Activated CD8-positive, alpha-beta memory T cell treated with anti-CD3 and anti-CD28 coated beads, Interleukin-2, amount 10 ng/mL, durations not matched to agents 7 days and 5 days (primary cell): ENCODE measurements at regions of chr13 and their contacts with region 1.

Region 1: GRCh38 chr13:45367358-45367757 is 26.4 kb upstream of the TPT1 start:
- DNase-seq: peak; percentile 97
- ATAC-seq: peak; percentile 100
- H3K4me3 Mint-ChIP-seq: peak overlapping the region; percentile 35
- H3K27ac Mint-ChIP-seq: peak overlapping the region; percentile 94
- H3K4me1 Mint-ChIP-seq: peaks cover 58% of the 10 kb centered on the region
- H3K27me3 Mint-ChIP-seq: no peaks in the 10 kb centered on the region

Region 2: DNA sequence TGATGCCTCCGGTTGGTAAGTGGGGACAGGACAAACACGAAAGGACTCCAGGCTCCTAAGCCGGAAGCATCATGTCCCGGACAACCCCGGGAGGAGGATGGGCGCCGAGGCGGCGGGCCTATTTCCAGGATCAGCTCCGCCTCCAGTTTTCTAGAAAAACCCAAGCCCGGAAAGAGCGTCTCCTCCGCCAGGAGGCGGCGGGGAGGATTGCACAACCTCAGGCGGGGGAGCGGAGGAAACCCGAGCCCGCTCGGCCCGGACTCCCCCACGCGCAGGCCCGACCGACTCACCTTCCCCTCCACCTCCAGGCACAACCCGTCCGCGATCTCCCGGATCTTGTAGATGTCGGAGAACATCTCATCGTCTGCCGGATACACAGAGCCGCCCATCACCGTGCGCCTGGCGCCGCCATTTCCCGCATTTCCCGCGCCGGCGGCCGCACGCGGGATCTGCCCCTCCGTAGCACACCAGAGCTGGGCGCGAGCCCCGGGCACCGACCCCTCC is 26.9 kb before region 1 on chr13:
- CTCF ChIA-PET with region 1: interaction called, 52 read pairs
- DNase-seq: peak; percentile 90
- ATAC-seq: peak; percentile 49
- H3K4me3 Mint-ChIP-seq: peak overlapping the region; percentile 92
- H3K27ac Mint-ChIP-seq: peak overlapping the region; percentile 100
- H3K4me1 Mint-ChIP-seq: peaks cover 56% of the 10 kb centered on the region
- H3K27me3 Mint-ChIP-seq: no peaks in the 10 kb centered on the region

Region 3: DNA sequence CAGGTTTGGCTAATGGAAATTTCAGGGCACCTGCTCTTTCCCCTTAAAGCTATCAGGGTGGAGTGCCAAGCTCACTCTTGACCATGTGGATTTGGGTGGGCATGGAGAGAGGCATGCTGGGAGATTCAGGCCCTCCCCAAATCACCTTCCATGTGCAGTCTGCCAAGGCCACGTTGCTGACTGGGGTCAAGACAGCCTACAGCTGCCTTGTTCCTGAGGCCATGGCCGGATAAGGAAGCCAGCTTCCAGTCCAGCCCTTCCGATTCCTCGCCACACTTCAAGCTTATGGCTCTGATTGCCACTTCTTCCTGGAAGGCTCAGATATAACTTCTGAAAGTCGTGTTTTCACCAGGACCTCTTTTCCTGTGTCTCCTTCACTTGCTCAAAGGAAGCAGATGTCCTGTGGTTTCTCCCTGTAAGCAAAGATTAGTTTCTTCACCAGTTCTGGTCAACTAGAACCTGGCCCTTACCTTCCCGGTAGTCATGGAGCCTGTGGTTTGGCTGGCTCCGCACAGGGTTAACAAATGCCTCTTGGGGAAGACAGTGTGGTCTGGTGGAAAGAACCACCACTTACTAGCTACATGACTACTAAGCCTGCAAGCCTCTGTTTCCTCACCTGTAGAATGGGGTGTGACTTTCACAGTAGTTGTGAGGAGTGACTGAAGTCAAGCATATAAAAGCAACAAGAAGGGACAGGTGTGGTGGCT is 10.2 kb before region 1 on chr13:
- CTCF ChIA-PET with region 1: interaction called, 19 read pairs
- DNase-seq: peak; percentile 68
- ATAC-seq: peak; percentile 80
- H3K4me3 Mint-ChIP-seq: no peak overlapping the region
- H3K27ac Mint-ChIP-seq: peak overlapping the region; percentile 66
- H3K4me1 Mint-ChIP-seq: peaks cover 34% of the 10 kb centered on the region
- H3K27me3 Mint-ChIP-seq: no peaks in the 10 kb centered on the region

Region 4: DNA sequence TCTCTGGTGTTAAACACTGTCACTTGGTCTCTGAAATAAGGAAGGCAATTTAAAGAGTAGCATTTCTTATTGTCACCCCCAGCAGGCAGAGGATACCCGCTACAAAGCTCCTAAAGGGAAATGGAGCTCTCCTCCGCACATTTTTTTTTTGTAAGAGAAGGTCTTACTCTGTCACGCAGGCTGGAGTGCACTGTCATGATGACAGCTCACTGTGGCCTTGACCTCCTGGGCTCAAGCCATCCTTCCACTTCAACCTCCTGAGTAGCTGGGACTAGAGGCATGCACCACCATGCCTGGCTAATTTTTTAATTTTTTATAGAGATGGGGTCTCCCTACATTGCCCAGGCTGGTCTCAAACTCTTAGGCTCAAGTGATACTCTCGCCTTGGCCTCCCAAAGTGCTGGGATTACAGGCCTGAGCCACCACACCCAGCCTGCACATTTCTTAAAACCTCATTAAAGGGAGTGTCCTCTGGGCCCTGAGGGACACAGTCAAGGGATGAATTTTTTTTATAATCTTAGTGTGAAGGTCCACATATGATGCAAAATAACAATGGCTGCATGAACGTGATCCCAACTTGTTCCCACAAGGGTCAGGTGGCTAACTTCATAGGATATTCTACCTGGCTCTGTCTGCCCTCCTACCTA is 18.7 kb after region 1 on chr13:
- CTCF ChIA-PET with region 1: interaction called, 27 read pairs
- DNase-seq: no peak
- ATAC-seq: no peak
- H3K4me3 Mint-ChIP-seq: no peak overlapping the region
- H3K27ac Mint-ChIP-seq: no peak overlapping the region
- H3K4me1 Mint-ChIP-seq: peaks cover 15% of the 10 kb centered on the region
- H3K27me3 Mint-ChIP-seq: no peaks in the 10 kb centered on the region

Region 5: GRCh38 chr13:45393941-45394570 is 26.7 kb after region 1 on chr13:
- CTCF ChIA-PET with region 1: interaction called, 108 read pairs
- DNase-seq: peak; percentile 54
- ATAC-seq: peak; percentile 28
- H3K4me3 Mint-ChIP-seq: no peak overlapping the region
- H3K27ac Mint-ChIP-seq: peak overlapping the region; percentile 35
- H3K4me1 Mint-ChIP-seq: peaks cover 47% of the 10 kb centered on the region
- H3K27me3 Mint-ChIP-seq: no peaks in the 10 kb centered on the region

Region 6: GRCh38 chr13:45417790-45418534 is 50.6 kb after region 1 on chr13 and contains the start of gene SLC25A30:
- CTCF ChIA-PET with region 1: interaction called, 31 read pairs
- DNase-seq: peak; percentile 95
- ATAC-seq: peak; percentile 96
- H3K4me3 Mint-ChIP-seq: peak within 1 kb of the TSS; percentile 92
- H3K27ac Mint-ChIP-seq: peak within 1 kb of the TSS; percentile 99
- H3K4me1 Mint-ChIP-seq: peaks cover 18% of the 10 kb centered on the region
- H3K27me3 Mint-ChIP-seq: no peaks in the 10 kb centered on the region
- total RNA-seq, gene SLC25A30: 23.5 to 28.4 TPM